Sigmoid colon (tissue), 7 donors: ENCODE measurements at regions of chr4 and their contacts with region 1.

Region 1: DNA sequence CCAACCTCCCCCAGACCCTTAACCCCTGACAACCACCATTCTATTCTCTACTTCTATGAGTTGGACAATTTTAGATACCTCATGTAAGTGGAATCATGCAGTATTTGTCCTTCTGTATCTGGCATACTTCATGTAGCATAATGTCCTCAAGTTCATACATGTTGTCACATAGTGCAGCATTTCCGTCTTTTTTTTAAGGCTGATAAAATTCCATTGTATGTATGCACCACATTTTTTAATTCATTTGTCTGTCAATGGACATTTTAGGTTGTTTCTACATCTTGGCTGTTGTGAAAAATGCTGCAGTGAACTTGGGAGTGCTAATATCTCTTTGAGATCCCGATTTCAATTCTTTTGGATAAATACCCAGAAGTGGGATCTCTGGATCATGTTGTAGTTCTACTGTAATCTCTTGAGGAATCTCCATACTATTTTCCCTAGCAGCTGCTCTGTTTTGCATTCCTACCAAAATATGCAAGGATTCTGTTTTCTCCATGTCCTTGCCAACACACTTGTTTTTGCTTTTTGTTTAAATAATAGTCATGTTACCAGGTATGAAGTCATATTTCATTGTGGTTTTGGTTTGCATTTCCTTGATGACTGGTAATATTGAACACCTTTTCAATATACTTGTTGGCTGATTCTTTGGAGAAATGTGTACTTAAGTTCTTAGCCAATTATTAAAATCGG is 48.8 kb upstream of the ADAD1 start:
- DNase-seq: no peak
- H3K4me3 ChIP-seq: no peak overlapping the region
- H3K27ac ChIP-seq: no peak overlapping the region
- H3K4me1 ChIP-seq: no peaks in the 10 kb centered on the region
- H3K27me3 ChIP-seq: no peaks in the 10 kb centered on the region
- CTCF ChIP-seq: no peak
- EP300 ChIP-seq: no peak
- POLR2A ChIP-seq: no peak

Region 2: GRCh38 chr4:122252584-122252983 is 77.4 kb before region 1 on chr4:
- intact Hi-C with region 1: loop called (anchors 10 kb)
- DNase-seq: no peak
- H3K4me3 ChIP-seq: no peak overlapping the region
- H3K27ac ChIP-seq: no peak overlapping the region
- H3K4me1 ChIP-seq: no peaks in the 10 kb centered on the region
- H3K27me3 ChIP-seq: no peaks in the 10 kb centered on the region
- CTCF ChIP-seq: no peak
- EP300 ChIP-seq: no peak
- POLR2A ChIP-seq: no peak